ENCODE measurements at regions of chr7 and their contacts with region 1.

Region 1: DNA sequence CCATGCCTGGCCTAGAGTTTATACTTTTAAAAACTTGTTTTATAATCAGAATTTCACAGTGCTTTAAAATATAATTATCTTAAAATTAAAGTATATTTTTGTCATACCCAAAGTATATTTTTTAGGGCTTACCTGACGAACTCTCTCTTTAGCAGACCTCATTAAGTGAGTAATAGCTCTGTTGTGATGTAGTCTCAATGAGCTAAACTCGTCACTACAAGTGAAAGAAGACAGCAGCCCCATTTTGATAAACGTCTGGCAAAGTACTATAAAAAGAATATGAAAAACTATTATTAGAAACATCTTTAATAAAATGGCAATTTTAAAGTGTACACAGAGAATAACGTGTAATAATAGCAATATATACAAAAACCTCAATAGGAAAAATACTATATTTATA is 18.6 kb downstream of the ANKRD61 start:
- DNase-seq: no peak
- H3K4me3 Mint-ChIP-seq: no peak overlapping the region
- H3K27ac Mint-ChIP-seq: no peak overlapping the region
- H3K4me1 Mint-ChIP-seq: peaks cover 4% of the 10 kb centered on the region
- H3K27me3 Mint-ChIP-seq: no peaks in the 10 kb centered on the region
- CTCF ChIP-seq: no peak

Region 2: DNA sequence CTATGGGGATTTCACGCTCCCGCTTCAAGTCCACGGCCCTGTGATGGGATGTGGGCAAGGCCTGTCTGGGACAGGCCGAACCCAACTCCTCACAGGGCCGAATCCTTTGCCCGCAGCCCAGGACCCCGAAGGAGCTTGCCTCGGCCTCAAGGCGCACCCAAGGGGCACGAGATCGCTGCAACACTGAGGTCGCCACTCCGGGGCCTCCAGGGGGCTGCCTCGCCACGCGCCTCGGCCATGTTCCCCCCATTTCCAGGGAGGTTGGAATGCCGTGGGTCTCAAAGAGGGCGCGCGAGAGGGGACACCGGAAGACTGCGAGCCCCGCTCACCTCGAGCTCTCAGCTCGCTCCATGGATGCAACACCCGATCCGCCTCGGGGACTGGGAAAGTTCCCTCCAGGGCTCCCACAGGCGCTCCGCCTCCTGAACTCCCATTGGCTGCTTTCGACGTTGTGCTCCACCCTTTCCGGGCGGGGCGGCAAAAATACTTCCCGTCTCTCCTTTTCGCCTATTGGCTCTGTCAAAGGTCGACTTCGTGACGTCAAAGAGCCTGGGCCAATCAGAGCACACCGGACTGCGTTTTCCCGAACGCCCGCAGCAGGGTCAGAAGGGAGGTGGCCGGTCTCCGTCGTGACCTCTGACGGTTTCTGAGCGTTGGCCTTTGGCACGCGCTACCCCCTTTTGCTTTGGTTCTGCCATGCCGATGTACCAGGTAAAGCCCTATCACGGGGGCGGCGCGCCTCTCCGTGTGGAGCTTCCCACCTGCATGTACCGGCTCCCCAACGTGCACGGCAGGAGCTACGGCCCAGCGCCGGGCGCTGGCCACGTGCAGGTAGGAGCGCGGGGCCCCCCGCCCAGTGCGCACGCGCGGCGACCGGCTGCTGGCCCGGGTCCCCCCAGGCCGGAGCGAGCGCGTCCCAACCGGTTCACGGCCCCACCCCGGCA is 40.8 kb before region 1 on chr7 and contains the starts of genes AIMP2 and PMS2:
- CTCF ChIA-PET with region 1: interaction called, 5 read pairs
- intact Hi-C with region 1: loop called (anchors 5 kb)
- DNase-seq: peak; percentile 99
- H3K4me3 Mint-ChIP-seq: peak within 1 kb of the TSS; percentile 90
- H3K27ac Mint-ChIP-seq: peak within 1 kb of the TSS; percentile 74
- H3K4me1 Mint-ChIP-seq: peaks cover 54% of the 10 kb centered on the region
- H3K27me3 Mint-ChIP-seq: no peaks in the 10 kb centered on the region
- CTCF ChIP-seq: no peak
- total RNA-seq, gene AIMP2: 74.2 and 85.9 TPM in 2 replicates
- total RNA-seq, gene PMS2: 32.6 and 33.2 TPM in 2 replicates

Region 3: DNA sequence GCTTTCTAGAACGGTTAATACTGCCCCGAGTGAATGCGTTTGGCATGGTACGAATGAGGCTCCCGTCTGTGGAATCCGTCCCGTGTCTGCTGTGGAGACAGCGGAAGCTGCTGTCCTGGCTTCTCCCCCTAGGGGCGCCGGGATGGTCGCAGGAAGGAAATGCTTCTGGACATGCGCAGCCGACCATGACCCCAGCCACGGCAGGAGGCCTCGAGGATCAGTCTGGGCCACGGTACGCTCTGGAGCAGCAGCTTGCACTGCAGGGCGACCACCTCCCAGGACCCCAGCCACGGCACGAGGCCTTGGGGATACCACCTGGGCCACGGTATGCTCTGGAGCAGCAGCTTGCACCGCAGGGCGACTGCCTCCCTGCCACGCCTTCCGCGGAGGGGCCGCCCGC is 114.7 kb after region 1 on chr7:
- CTCF ChIA-PET with region 1: no interaction called
- intact Hi-C with region 1: no loop called
- DNase-seq: no peak
- H3K4me3 Mint-ChIP-seq: no peak overlapping the region
- H3K27ac Mint-ChIP-seq: no peak overlapping the region
- H3K4me1 Mint-ChIP-seq: no peaks in the 10 kb centered on the region
- H3K27me3 Mint-ChIP-seq: no peaks in the 10 kb centered on the region
- CTCF ChIP-seq: peak; percentile 26

Measured in Calu3 (cell line).